Naive thymus-derived CD4-positive, alpha-beta T cell (primary cell): ENCODE measurements at regions of chr5 and their contacts with region 1.

Region 1: DNA sequence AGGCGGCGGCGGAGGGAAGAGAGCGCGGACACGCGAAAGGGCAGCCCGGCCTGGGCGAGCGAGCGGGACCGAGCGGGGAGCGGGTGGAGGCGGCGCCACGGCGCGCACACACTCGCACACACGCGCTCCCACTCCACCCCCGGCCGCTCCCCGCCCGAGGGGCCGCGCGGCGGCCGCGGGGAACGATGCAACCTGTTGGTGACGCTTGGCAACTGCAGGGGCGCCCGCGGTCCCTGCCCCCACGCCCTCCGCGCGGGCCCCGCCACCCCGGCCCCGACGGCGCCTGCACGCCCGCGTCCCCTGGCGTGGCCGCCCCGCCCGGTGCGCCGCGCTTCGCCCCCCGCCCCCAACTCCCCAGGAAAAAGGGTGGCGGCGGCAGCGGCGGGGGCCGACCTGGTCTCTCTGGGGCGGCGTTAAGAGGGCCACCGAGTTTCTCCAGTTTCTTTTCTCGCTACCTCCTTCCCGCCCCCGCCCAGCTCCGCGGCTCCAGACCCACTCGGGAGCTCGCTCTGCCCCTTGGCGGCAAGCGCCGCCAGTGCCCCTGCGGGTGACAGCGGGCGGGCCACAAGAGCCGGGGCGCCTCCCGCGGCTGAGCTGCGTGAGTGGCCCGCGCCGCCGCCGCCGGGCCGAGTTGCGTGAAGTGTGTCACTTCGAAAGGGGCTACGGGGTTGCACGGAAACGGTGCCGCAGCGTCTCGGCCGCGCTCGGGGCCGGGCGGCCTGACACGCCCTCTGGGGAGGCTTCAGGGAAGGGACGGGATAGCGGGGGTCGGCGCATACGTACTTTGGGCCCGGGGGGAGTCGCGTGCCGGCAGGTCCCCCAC is at the start of gene NR3C1:
- DNase-seq: peak; percentile 83 to 92 (median 90)
- ATAC-seq: peak; percentile 85
- H3K4me3 ChIP-seq: peak within 1 kb of the TSS; percentile 98
- H3K4me3 Mint-ChIP-seq: peak within 1 kb of the TSS; percentile 93 to 99 (median 96)
- H3K27ac ChIP-seq: peak within 1 kb of the TSS; percentile 91
- H3K27ac Mint-ChIP-seq: peak within 1 kb of the TSS; percentile 98 to 100 (median 99)
- H3K4me1 ChIP-seq: peaks cover 17 to 29% of the 10 kb centered on the region in 2 donors
- H3K4me1 Mint-ChIP-seq: peaks cover 30 to 48% (median 40%) of the 10 kb centered on the region in 7 donors
- H3K27me3 ChIP-seq: no peaks in the 10 kb centered on the region
- H3K27me3 Mint-ChIP-seq: peaks cover 0 to 2% (median 0%) of the 10 kb centered on the region in 5 donors
- total RNA-seq, gene NR3C1: 68.0 to 140 (median 121) TPM

Region 2: DNA sequence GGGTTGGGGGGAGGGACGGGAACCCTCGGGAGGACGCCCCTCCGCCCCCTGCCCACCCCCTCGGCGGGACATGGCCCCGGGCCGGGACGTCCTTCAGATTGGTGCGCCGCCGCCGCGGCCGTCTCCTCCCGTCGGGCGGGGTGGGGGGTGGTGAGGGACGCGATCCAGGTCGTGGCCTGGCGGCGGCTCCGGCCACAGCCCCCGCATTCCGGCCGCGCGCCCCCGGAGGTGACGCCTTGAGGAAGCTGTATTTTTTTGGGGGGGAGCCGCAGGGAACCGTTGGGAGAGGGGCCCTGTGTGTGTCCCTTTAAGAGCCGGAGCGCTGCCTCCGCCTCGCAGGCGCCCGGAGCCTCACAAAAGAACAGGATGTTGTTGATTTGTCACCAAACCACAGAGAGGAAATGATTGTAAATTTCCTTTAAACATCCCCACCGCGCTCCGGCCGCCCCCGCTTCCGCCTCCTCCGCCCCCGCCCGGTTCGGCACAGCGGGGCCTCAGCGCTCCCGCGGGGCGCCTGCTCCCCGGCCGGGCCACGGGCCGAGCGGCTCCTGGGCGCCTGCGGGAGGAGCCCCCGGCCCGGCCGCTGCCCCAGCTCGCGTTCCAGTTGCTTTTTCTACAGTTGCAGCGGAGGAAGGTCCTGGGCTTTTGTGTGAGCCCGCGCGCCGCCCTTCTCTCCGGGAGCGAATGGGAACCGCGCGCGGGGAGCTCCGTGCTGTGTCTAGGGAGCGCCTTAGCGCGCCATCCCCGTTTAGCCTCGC is 1046.9 kb before region 1 on chr5:
- CTCF ChIA-PET with region 1: no interaction called
- POLR2A ChIA-PET with region 1: no interaction called
- intact Hi-C with region 1: loop called (anchors 2 to 5 kb)
- DNase-seq: peak; percentile 69 to 96 (median 88)
- ATAC-seq: peak; percentile 95
- H3K4me3 ChIP-seq: peak overlapping the region; percentile 62
- H3K4me3 Mint-ChIP-seq: peak overlapping the region; percentile 78 to 88 (median 86)
- H3K27ac ChIP-seq: peak overlapping the region; percentile 35
- H3K27ac Mint-ChIP-seq: peak overlapping the region; percentile 58 to 93 (median 86)
- H3K4me1 ChIP-seq: peaks cover 15 to 35% of the 10 kb centered on the region in 2 donors
- H3K4me1 Mint-ChIP-seq: peaks cover 24 to 64% (median 53%) of the 10 kb centered on the region in 7 donors
- H3K27me3 ChIP-seq: no peaks in the 10 kb centered on the region
- H3K27me3 Mint-ChIP-seq: peaks cover 0 to 12% (median 0%) of the 10 kb centered on the region in 5 donors

Region 3: DNA sequence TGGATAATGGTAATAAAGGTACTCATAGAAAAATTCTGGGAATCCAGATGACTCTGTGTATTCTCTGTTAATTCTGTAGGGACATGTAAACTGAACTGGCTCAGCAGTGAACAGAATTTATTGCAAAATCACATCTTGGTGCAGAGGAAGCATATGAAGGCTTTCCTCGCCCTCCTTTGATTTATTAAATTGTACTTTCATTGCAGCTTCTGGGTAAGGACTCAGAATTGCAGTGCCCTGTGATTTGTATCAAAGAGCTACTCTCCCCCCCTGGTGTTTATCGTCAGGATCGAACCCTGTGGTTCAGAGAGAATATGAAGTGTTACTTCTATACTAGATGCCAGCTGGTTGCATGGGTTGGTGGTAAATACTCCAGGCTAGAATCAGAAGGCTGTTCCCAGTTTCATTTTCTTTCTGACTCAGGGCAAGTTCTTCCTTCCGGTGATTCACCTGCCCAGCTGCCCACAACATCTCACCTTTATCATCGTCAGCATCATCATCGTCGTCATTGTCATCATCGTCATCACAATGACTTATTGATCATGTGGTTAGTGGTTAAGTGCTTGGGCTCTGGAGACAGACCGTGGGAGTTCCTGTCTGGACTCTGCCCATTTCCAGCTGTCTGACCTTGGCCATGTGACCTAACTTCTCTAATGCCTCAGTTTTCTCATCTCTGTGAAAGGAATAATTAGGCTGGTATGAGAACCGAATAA is 394.8 kb before region 1 on chr5:
- CTCF ChIA-PET with region 1: interaction called, 6 read pairs
- POLR2A ChIA-PET with region 1: interaction called, 32 read pairs
- intact Hi-C with region 1: loop called in 1 of 2 experiments (anchors 1 kb)
- DNase-seq: peak in 8 of 9 donors; percentile 10 to 73 (median 36)
- ATAC-seq: peak; percentile 91
- H3K4me3 ChIP-seq: no peak overlapping the region
- H3K4me3 Mint-ChIP-seq: peak overlapping the region in 4 of 10 donors; percentile 4 to 44 (median 27)
- H3K27ac ChIP-seq: no peak overlapping the region
- H3K27ac Mint-ChIP-seq: peak overlapping the region in 7 of 9 donors; percentile 45 to 86 (median 71)
- H3K4me1 ChIP-seq: peaks cover 12 to 43% of the 10 kb centered on the region in 2 donors
- H3K4me1 Mint-ChIP-seq: peaks cover 27 to 74% (median 32%) of the 10 kb centered on the region in 7 donors
- H3K27me3 ChIP-seq: no peaks in the 10 kb centered on the region
- H3K27me3 Mint-ChIP-seq: no peaks in the 10 kb centered on the region

Region 4: GRCh38 chr5:143222287-143223231 is 181.2 kb before region 1 on chr5:
- CTCF ChIA-PET with region 1: no interaction called
- POLR2A ChIA-PET with region 1: no interaction called
- intact Hi-C with region 1: loop called (anchors 1 to 5 kb)
- DNase-seq: peak; percentile 13 to 55 (median 27)
- ATAC-seq: peak; percentile 81
- H3K4me3 ChIP-seq: peak overlapping the region; percentile 7
- H3K4me3 Mint-ChIP-seq: peak overlapping the region; percentile 9 to 80 (median 54)
- H3K27ac ChIP-seq: peak overlapping the region; percentile 40
- H3K27ac Mint-ChIP-seq: peak overlapping the region; percentile 60 to 94 (median 88)
- H3K4me1 ChIP-seq: peaks cover 0 to 30% of the 10 kb centered on the region in 2 donors
- H3K4me1 Mint-ChIP-seq: peaks cover 33 to 76% (median 40%) of the 10 kb centered on the region in 7 donors
- H3K27me3 ChIP-seq: no peaks in the 10 kb centered on the region
- H3K27me3 Mint-ChIP-seq: no peaks in the 10 kb centered on the region

Region 5: DNA sequence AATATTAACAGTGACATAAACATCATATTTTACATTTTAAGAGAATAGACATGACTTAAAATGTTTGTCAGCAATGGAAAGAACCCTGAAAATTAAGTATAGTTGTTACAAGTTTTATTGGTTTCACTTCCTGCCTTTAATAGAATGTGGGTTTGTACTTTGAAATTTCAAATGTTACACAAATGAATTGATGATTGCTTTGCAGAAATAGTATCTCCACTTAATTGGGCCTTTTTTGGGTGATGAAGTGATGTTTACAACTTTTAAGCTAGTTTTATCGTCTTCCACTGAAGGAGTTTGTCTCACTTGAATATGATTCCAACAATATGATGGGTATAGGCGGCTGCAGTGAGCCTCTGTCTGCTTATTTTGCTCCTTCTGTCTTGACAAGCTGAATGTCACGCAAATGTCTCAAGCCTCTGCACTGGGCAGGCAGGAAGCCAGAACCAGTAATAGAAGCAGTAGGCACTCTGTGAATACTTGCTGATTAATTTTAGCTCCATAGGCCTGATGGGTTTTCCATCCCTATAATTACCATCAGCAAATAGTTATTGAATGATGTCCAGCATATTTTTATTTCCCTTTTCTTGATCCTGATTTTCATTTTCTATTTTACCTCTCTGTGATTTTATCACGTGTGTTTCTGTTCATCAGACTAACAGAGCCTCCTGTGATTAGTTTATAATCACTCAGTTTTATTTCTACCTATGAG is 10.3 kb after region 1 on chr5:
- CTCF ChIA-PET with region 1: no interaction called
- POLR2A ChIA-PET with region 1: interaction called, 11 read pairs
- intact Hi-C with region 1: no loop called
- DNase-seq: no peak
- ATAC-seq: no peak
- H3K4me3 ChIP-seq: no peak overlapping the region
- H3K4me3 Mint-ChIP-seq: no peak overlapping the region
- H3K27ac ChIP-seq: no peak overlapping the region
- H3K27ac Mint-ChIP-seq: no peak overlapping the region
- H3K4me1 ChIP-seq: peaks cover 0 to 15% of the 10 kb centered on the region in 2 donors
- H3K4me1 Mint-ChIP-seq: peaks cover 0 to 20% (median 5%) of the 10 kb centered on the region in 7 donors
- H3K27me3 ChIP-seq: no peaks in the 10 kb centered on the region
- H3K27me3 Mint-ChIP-seq: no peaks in the 10 kb centered on the region

Region 6: DNA sequence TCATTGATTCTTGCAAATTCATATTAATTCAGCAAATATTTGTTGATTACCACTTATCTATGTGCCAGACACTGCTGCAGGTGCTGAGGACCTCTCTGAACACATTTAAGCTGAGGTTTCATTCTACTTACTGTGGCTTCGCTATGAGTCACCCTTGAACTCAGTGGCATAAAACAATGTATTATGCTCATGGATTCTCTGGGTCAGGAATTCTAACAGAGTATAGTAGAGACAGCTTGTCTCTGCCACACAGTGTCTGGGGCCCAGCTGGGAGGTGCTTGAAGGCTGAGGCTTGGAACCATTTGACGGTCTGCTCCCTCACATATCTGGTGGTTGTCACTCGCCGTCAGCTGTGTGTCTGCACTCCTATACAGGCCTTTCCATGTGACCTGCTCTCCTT is 124.0 kb after region 1 on chr5:
- CTCF ChIA-PET with region 1: no interaction called
- POLR2A ChIA-PET with region 1: no interaction called
- intact Hi-C with region 1: no loop called
- DNase-seq: no peak
- ATAC-seq: no peak
- H3K4me3 ChIP-seq: no peak overlapping the region
- H3K4me3 Mint-ChIP-seq: no peak overlapping the region
- H3K27ac ChIP-seq: no peak overlapping the region
- H3K27ac Mint-ChIP-seq: no peak overlapping the region
- H3K4me1 ChIP-seq: no peaks in the 10 kb centered on the region
- H3K4me1 Mint-ChIP-seq: no peaks in the 10 kb centered on the region
- H3K27me3 ChIP-seq: no peaks in the 10 kb centered on the region
- H3K27me3 Mint-ChIP-seq: peaks cover 0 to 11% (median 9%) of the 10 kb centered on the region in 5 donors

Region 7: GRCh38 chr5:143968011-143968878 is 564.4 kb after region 1 on chr5:
- CTCF ChIA-PET with region 1: no interaction called
- POLR2A ChIA-PET with region 1: no interaction called
- intact Hi-C with region 1: loop called (anchors 5 to 10 kb)
- DNase-seq: peak in 6 of 9 donors; percentile 13 to 43 (median 27)
- ATAC-seq: no peak
- H3K4me3 ChIP-seq: no peak overlapping the region
- H3K4me3 Mint-ChIP-seq: no peak overlapping the region
- H3K27ac ChIP-seq: no peak overlapping the region
- H3K27ac Mint-ChIP-seq: no peak overlapping the region
- H3K4me1 ChIP-seq: no peaks in the 10 kb centered on the region
- H3K4me1 Mint-ChIP-seq: peaks cover 0 to 6% (median 0%) of the 10 kb centered on the region in 7 donors
- H3K27me3 ChIP-seq: no peaks in the 10 kb centered on the region
- H3K27me3 Mint-ChIP-seq: peaks cover 6 to 27% (median 22%) of the 10 kb centered on the region in 5 donors